Panc1 (cell line): ENCODE measurements at regions of chr12 and their contacts with region 1.

Region 1: GRCh38 chr12:50066433-50066832 is 9.0 kb downstream of the ASIC1 start:
- DNase-seq: no peak
- ATAC-seq: no peak
- H3K4me3 ChIP-seq: no peak overlapping the region
- H3K27ac ChIP-seq: no peak overlapping the region
- H3K4me1 ChIP-seq: 0 out of 2 replicates have a peak, but pooled peaks cover 3% of the 10 kb centered on the region
- H3K27me3 ChIP-seq: no peaks in the 10 kb centered on the region
- CTCF ChIP-seq: no peak

Region 2: DNA sequence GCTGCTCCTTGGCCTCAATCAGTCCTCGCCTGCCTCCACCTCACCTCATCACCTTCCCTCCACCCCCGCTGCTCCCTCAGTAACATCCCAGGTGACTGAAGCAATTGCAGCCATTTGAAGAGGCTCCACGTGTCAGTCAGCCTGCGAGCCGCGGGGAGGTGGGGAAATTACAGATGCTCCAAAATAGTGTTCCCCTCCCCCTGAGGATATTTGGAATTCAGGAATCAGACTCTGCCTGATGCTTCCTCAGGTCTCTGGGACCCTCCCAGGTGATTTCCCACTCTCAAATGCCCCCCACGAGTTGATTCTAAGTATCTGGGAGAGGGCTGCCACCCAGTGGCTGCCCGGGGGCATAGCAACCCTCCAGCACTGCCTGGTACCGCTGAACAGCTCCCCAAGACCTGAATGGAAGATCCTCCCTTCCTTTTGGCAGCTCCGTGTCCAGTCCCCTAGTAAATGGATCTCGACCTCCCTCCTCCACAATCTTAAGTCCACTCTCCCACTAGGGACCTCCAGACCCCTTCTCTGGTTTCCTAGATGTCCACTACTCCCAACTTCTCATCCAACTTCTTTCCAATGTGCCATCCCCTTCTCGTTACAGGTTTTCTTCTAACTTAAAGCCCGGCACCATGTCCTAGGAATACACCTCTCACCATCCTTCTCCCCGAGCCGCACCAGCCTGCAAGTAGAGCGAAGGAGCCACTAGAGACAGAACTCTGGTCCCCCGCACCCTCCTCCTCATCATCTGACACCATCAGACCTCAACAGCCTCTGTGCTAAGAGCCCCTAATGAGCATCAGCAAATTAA is 10.4 kb before region 1 on chr12:
- CTCF ChIA-PET with region 1: interaction called, 13 read pairs
- POLR2A ChIA-PET with region 1: no interaction called
- in situ Hi-C with region 1: no loop called
- intact Hi-C with region 1: no loop called
- DNase-seq: no peak
- ATAC-seq: peak; percentile 69
- H3K4me3 ChIP-seq: peak overlapping the region in 1 of 2 experiments; percentile 25; a peak in 1 of 4 replicates
- H3K27ac ChIP-seq: no peak overlapping the region
- H3K4me1 ChIP-seq: peaks cover 13% of the 10 kb centered on the region
- H3K27me3 ChIP-seq: 0 out of 2 replicates have a peak, but pooled peaks cover 4% of the 10 kb centered on the region
- CTCF ChIP-seq: peak; percentile 97